Astrocyte of the cerebellum (primary cell): ENCODE measurements at regions of chr20 and their contacts with region 1.

Region 1: GRCh38 chr20:48295445-48295963 is 510.2 kb upstream of the SULF2 start:
- DNase-seq: peak; percentile 91
- H3K4me3 ChIP-seq: no peak overlapping the region
- CTCF ChIP-seq: peak; percentile 56

Region 2: DNA sequence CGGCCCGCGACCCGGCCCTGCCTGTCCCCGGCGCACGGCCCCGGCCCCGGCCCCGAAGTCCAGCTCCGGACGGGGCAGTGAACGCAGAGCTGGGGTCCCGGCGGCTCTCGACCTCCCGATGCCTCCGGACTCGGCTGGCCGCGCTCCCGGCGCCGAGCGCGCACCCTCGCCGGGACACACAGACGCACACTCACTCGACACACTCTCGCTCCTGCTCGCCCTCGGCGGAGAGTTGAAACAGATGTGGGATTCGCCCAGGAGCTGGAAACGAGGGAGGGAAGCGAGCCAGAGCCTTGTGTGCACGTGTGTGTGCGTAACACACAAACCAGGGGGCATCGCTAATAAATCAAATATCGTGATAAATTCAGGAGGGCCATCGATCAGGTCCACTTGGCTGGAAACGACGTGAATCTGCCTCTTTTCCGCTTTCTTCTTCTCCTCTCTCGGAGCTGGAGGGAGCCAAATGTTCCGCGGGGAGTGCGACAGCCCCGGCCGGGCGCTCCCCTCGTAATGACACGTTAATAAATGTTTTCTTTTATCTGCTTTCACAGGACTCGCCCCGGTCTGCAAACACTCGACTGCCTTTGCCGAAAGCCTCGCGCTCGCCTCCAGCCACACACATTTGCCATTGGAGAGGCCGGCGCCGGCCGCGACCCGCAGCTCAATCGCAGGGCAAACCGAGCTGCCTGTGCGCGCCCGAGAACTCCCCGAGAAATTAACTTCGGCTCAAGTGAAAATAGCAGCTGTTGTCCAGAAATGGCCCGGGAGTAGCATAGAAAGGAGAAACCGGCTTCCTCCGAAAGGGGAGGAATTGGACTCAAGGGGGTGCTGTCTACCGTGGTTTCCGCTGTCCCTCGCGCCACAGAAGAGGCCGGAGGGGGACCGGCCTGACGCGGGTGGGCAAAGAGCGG is 509.4 kb before region 1 on chr20:
- in situ Hi-C with region 1: loop called (anchors 10 kb)
- DNase-seq: peak; percentile 69
- H3K4me3 ChIP-seq: peak overlapping the region; percentile 44
- CTCF ChIP-seq: peak; percentile 71

Region 3: DNA sequence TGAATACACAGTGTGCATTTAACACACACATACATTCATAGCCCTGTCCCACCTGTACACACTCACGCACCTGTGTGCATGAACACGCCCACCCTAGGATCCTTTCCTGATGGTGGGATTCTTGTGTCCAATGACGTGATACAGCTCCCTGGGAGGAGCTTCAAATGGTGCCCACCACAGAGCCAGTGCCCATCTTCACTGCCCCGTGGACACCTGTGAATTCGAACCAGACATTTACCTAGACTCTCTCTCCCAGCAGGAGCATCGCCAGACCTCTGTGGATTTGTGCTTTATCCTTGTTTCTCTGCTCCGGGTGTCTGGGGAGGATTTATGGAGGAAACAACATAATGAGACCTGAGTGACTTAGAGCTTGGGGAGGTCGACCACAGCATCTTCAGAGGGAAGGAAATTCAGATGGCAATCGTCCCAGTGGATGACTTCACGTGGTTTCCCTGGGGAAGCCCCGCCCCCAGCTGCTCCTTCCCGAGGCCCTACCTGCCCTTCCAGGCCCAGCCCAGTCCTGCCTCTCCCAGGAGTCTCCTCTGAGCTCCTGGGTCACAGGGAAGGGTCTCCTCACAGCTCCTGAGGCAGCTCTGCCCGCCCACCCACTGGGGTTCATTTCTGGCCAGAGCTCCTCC is 80.1 kb before region 1 on chr20:
- in situ Hi-C with region 1: no loop called
- DNase-seq: no peak
- H3K4me3 ChIP-seq: no peak overlapping the region
- CTCF ChIP-seq: no peak

Region 4: GRCh38 chr20:48374991-48375595 is 79.6 kb after region 1 on chr20:
- in situ Hi-C with region 1: no loop called
- DNase-seq: no peak
- H3K4me3 ChIP-seq: no peak overlapping the region
- CTCF ChIP-seq: no peak

Region 5: GRCh38 chr20:48620519-48621254 is 325.2 kb after region 1 on chr20:
- in situ Hi-C with region 1: loop called (anchors 5 kb)
- DNase-seq: peak; percentile 64
- H3K4me3 ChIP-seq: peak overlapping the region; percentile 17
- CTCF ChIP-seq: peak; percentile 95

Region 6: GRCh38 chr20:48635433-48636310 is 340.2 kb after region 1 on chr20:
- in situ Hi-C with region 1: no loop called
- DNase-seq: no peak
- H3K4me3 ChIP-seq: no peak overlapping the region
- CTCF ChIP-seq: peak; percentile 98